ENCODE measurements at regions of chr7 and their contacts with region 1.

Region 1: DNA sequence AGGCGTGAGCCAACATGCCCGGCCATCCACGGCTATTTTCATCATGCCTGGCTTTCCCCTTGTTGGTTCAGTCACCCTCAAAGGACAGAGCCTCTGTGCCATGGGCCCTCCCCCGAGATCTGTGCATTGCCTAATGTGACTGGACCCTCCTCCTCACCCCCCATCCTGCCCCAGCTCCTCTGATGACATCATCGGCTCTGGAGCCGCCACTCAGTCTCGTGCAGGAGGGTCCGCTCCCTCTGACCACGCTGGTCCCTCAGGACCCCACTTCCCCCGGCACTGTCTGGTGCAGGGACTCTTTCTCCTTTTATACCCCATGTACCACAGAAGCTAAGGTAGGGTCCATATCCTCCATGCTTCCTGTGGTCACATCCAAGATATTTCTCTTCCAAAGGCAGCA is 33.2 kb upstream of the BAIAP2L1 start:
- DNase-seq: no peak
- H3K4me3 ChIP-seq: no peak overlapping the region
- H3K27ac ChIP-seq: no peak overlapping the region
- H3K4me1 ChIP-seq: no peaks in the 10 kb centered on the region
- H3K27me3 ChIP-seq: no peaks in the 10 kb centered on the region
- CTCF ChIP-seq: no peak
- POLR2A ChIP-seq: no peak

Region 2: DNA sequence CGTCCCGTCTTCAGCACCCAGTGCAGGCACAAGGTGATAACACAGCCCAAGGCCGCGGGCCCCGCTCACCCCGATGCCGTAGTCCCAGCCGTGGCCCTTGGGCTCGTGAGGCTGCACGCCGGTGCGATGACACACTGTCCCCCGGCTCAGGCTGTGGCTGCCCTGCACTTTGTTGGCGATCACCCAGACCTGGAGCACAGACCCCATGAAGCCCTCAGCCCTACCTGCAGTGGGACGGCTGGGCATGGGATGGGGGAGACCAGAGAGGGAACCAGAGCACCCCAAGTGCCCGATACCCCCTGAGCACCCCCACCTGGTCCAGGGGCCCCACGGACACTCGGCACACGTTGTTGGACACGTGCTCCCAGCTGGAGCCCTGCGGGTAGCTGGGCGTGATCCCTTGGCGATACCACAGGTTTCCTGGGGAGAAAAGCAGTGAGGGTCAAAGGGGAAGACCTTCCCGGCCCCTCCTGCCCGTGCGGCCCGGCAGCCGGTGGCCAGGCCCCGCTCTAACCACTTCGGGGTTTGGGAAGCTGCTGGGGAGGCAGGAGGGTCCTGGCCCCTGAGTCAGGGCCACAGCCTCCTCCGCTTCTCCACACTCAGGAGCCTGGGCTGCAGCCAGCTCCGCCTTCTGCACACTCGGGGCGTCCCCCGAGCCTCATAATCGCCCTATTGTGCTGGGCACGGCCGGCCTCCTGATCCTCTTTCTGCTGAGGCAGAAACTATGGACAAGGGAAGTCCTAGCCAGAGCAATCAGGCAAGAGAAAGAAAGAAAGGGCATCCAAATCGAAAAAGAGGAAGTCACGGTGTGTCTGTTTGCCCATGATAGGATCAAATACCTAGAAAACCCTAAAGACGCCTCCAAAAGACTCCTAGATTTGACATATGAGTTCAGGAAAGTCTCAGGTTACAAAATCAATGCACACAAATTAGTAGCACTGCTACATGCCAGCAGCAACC is 216.2 kb before region 1 on chr7:
- intact Hi-C with region 1: no loop called
- DNase-seq: no peak
- H3K4me3 ChIP-seq: no peak overlapping the region
- H3K27ac ChIP-seq: peak overlapping the region; percentile 68 to 81
- H3K4me1 ChIP-seq: peaks cover 12% of the 10 kb centered on the region
- H3K27me3 ChIP-seq: no peaks in the 10 kb centered on the region
- CTCF ChIP-seq: no peak
- POLR2A ChIP-seq: no peak

Region 3: DNA sequence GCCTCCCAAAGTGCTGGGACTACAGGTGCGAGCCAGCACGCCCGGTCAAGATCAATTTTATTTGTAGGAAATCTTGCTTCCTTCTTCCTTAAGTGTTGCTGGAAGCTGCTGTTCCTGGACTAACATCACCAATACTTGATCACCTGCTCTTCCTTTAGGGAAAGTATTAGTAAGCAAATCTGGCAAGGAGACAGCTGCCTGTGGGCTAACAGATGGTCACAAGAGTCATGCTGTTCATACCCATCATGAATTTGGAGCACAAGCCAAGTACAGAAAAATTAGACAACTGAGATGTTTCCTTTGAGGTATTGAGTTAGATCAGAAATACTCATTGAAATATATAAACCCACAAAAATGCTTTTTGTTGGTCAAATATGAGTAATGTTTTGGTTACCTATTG is 61.1 kb before region 1 on chr7:
- intact Hi-C with region 1: no loop called
- DNase-seq: no peak
- H3K4me3 ChIP-seq: no peak overlapping the region
- H3K27ac ChIP-seq: no peak overlapping the region
- H3K4me1 ChIP-seq: no peaks in the 10 kb centered on the region
- H3K27me3 ChIP-seq: no peaks in the 10 kb centered on the region
- CTCF ChIP-seq: no peak
- POLR2A ChIP-seq: no peak

Region 4: DNA sequence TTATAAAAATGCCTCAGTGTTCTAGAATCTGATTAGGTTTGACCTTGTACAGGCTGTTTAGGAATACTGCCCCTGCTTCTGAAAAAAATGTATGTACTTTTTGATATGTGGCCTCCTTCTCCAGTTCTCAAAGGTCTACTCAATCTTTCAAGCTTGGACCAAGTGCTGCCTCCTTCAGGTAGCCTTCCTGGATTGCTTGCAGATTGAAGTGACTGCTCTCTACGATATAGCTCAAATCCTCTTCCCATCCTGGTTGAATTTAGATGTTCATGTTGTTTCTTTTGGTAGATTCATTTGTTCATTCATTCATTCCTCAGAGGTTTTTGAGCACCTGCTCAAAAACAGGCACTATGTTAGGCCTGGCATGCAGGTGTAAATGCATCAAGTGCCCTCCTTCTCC is 105.8 kb after region 1 on chr7:
- intact Hi-C with region 1: no loop called
- DNase-seq: no peak
- H3K4me3 ChIP-seq: no peak overlapping the region
- H3K27ac ChIP-seq: no peak overlapping the region
- H3K4me1 ChIP-seq: no peaks in the 10 kb centered on the region
- H3K27me3 ChIP-seq: no peaks in the 10 kb centered on the region
- CTCF ChIP-seq: no peak
- POLR2A ChIP-seq: no peak

Region 5: DNA sequence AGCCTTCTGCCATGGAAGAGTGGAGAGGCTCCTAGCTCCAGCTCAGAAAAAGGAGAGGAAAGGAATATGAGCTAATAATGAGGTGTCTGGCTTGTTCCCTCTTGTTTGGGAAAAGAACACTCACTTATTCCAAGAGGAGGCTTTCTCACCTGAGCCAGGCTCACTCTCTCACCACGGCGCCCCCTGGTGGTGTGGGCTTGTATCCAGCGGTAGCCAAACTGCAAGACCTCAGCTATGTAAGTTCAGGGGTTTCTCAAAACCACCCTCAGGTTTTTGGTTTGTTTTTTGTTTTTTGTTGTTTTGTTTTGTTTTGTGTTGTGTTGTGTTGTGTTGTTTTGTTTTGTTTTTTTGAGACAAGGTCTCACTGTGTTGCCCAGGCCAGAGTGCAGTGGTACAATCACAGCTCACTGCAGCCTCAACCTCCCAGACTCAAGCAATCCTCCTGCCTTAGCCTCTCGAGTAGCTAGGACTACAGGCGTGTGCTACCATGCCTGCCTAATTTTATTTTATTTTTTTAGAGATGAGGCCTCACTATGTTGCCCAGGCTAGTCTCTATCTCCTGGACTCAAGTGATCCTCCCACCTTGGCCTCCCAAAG is 311.7 kb after region 1 on chr7:
- intact Hi-C with region 1: loop called (anchors 10 kb)
- DNase-seq: peak; percentile 57
- H3K4me3 ChIP-seq: no peak overlapping the region
- H3K27ac ChIP-seq: no peak overlapping the region
- H3K4me1 ChIP-seq: no peaks in the 10 kb centered on the region
- H3K27me3 ChIP-seq: no peaks in the 10 kb centered on the region
- CTCF ChIP-seq: peak; percentile 35 to 81 (median 64)
- POLR2A ChIP-seq: no peak

Region 6: DNA sequence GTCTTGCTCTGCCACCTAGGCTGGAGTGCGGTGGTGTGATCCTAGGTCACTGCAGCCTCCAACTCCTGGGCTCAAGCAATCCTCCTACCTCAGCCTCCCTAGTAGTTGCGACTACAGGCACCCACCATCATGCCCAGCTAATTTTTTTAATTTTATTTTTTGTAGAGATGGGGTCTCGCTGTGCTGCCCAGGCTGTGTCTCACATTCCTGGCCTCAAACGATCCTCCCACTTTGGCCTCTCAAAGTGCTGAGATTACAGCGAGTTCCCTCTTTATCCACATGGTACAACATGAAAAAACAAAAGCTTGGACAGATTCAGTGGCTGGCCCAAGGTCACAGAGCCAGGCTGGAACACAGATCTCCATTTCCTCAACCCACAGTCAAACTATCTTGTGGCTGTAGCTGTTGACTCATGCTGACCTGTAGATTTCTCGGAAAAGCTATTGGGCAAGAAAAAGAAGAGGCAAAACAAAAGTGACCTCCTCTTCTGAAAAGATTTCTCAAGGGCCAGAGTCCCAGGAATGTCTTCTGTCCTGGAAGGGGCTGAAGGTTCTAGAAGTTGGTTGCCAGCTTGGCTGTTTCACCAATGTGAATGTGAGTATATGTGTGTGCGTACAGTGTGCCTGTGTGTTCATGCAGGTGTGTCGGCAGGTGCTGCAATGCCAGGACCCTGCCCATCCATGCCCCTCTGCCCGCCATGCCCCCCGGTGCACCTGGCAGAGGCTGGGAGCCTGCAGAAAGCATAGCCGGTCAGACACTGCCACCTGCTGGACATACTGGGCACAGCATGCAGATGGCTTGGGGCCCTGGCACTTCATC is 407.3 kb after region 1 on chr7:
- intact Hi-C with region 1: loop called (anchors 2 kb)
- DNase-seq: peak; percentile 42
- H3K4me3 ChIP-seq: no peak overlapping the region
- H3K27ac ChIP-seq: no peak overlapping the region
- H3K4me1 ChIP-seq: no peaks in the 10 kb centered on the region
- H3K27me3 ChIP-seq: no peaks in the 10 kb centered on the region
- CTCF ChIP-seq: peak; percentile 93 to 95 (median 94)
- POLR2A ChIP-seq: no peak

Measured in prostate gland (tissue), 2 donors.